ENCODE measurements at regions of chr1 and their contacts with region 1.

Region 1: GRCh38 chr1:202235856-202236837 is 42.5 kb downstream of the LGR6 start:
- DNase-seq: peak; percentile 53 to 71
- ATAC-seq: peak; percentile 81 to 92 (median 86)
- H3K4me3 ChIP-seq: no peak overlapping the region
- H3K27ac ChIP-seq: no peak overlapping the region
- H3K4me1 ChIP-seq: peaks cover 5% of the 10 kb centered on the region
- H3K27me3 ChIP-seq: peaks cover 0 to 6% (median 0%) of the 10 kb centered on the region in 3 donors
- CTCF ChIP-seq: peak; percentile 80

Region 2: DNA sequence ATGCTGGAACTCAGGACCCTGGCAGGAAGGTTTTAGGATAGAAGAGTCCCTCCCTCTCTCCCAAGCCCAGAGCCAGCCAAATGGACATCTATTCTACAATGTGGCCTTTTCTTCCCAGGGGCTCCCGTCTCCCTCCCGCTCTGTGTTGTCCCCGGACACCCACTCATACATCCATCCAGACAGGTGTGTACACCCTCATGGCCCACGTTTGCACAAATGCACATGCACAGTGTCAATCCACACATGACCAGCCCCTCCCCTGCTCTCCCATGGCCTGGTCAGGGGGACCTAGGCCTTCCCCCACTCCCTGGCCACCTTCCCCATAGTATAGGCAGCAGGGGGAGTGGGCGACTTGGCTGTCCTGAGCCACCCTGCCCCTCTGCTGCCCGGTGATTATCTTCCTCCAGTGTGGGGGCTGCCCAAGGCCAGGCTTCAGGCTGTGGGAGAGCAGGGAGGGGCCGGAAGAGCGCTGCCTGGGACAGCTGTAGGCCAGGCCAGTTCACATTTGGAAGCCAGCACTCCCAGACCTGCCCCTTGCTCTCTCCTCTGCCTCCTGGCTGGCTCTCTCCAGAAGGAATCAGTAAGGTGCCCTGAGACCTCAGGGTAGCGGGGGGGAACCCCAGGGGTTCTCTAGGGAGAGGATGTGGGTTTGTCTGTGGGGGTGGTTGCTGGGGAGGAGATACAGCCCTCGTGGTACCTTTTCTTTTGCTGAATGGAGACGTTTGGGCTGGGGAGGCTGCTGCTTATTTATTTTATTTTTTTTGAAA is 71.7 kb before region 1 on chr1:
- intact Hi-C with region 1: no loop called
- DNase-seq: no peak
- ATAC-seq: no peak
- H3K4me3 ChIP-seq: no peak overlapping the region
- H3K27ac ChIP-seq: no peak overlapping the region
- H3K4me1 ChIP-seq: no peaks in the 10 kb centered on the region
- H3K27me3 ChIP-seq: peaks cover 0 to 4% (median 0%) of the 10 kb centered on the region in 3 donors
- CTCF ChIP-seq: no peak

Region 3: DNA sequence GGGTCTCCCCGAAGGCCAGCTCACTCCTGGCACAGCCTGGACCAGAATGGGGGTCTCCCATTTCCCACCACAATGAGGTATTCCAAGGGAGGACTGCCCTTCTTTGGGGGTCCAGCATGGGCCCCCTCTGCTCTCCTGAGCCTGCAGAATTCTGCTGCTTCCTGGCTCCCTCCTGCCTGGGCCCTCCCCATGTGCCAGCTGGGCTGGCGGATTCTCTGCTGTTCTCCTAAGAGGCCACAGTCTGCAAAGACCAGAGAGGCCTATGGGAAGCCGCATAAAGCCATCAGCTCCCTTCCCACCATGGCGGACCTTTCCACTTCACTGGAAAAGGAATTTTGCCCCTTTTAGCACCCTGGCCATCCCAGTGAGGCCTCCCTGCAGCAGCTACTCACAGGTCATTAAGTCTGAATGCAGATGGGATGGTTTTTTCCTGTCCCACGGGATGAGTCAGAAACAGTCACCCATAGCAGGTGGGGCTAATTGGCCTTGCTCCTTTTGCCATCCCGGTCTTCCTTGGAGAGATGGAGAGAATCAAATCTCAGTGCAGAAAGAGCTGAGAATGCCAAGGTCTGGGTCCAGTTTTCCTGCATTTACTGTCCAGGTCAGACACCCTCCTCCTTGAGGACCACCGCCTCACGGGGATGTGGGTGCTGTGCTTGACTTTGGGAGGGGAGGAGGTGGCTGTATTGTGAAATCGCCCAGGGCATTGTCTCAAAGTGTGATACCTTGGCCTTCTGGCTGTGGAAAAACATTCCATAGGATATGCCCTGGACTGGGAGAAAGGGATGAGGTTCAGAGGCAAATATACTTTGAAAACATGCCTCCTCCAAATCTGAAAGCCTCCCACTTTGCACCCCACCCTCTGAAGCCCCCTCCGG is 916.2 kb after region 1 on chr1:
- intact Hi-C with region 1: loop called in 1 of 2 experiments (anchors 10 kb)
- DNase-seq: no peak
- ATAC-seq: no peak
- H3K4me3 ChIP-seq: no peak overlapping the region
- H3K27ac ChIP-seq: no peak overlapping the region
- H3K4me1 ChIP-seq: no peaks in the 10 kb centered on the region
- H3K27me3 ChIP-seq: peaks cover 0 to 4% (median 0%) of the 10 kb centered on the region in 3 donors
- CTCF ChIP-seq: no peak